PC-9 (cell line): ENCODE measurements at regions of chr1 and their contacts with region 1.

Region 1: GRCh38 chr1:19139711-19140110 is 70.4 kb downstream of the UBR4 start:
- DNase-seq: no peak
- H3K4me3 ChIP-seq: no peak overlapping the region
- H3K27ac ChIP-seq: no peak overlapping the region
- H3K4me1 ChIP-seq: no peaks in the 10 kb centered on the region
- H3K27me3 ChIP-seq: no peaks in the 10 kb centered on the region
- CTCF ChIP-seq: no peak

Region 2: DNA sequence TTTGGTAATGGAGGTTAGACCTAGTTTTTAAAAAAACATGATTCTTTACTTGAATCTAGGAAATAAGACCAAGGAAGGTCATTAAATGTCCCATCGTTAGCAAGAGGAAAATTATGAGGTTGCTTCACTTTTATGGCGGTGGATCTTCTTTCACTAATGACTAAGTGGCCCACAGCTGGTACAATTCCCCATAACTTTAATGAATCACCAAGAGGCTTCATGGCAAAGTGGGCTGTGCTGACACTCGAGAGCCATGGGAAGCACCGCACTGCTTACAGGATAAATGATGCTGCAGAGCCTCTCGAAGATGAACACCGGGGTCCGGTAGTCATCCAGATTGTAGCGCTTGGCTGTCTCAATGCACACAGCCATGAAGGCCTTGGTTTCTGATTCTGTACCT is 38.5 kb before region 1 on chr1:
- CTCF ChIA-PET with region 1: no interaction called
- POLR2A ChIA-PET with region 1: interaction called, 11 read pairs
- intact Hi-C with region 1: no loop called
- DNase-seq: no peak
- H3K4me3 ChIP-seq: no peak overlapping the region
- H3K27ac ChIP-seq: no peak overlapping the region
- H3K4me1 ChIP-seq: no peaks in the 10 kb centered on the region
- H3K27me3 ChIP-seq: no peaks in the 10 kb centered on the region
- CTCF ChIP-seq: no peak

Region 3: GRCh38 chr1:19374083-19374801 is 234.5 kb after region 1 on chr1:
- CTCF ChIA-PET with region 1: no interaction called
- POLR2A ChIA-PET with region 1: no interaction called
- intact Hi-C with region 1: no loop called
- DNase-seq: no peak
- H3K4me3 ChIP-seq: no peak overlapping the region
- H3K27ac ChIP-seq: no peak overlapping the region
- H3K4me1 ChIP-seq: no peaks in the 10 kb centered on the region
- H3K27me3 ChIP-seq: no peaks in the 10 kb centered on the region
- CTCF ChIP-seq: peak; percentile 58; the same call in 1 of the 2 replicates